Activated CD4-positive, alpha-beta memory T cell treated with anti-CD3 and anti-CD28 coated beads for 36 hours (primary cell): ENCODE measurements at regions of chr10 and their contacts with region 1.

Region 1: DNA sequence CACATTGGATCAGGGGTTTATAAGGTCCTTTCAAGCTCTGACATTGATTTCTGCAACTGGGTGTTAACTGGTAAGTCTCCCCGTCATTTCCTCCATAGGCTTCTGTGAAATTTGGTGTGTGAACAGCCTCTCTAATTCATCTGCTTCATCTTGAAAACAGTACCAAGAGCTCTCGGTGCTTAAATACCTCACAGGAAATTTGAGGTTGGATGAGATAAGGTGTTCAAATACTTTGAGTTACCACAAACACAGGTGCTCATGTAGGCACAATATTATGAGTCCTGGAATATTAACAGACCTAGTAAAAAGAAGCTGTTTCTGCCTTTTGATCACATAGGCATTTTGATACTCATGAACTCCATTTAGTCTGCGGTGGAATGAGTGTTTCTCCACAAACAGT is 85.2 kb downstream of the RTKN2 start:
- DNase-seq: peak; percentile 40
- H3K4me3 Mint-ChIP-seq: no peak overlapping the region
- H3K27ac Mint-ChIP-seq: peak overlapping the region; percentile 96
- H3K4me1 Mint-ChIP-seq: peaks cover 85% of the 10 kb centered on the region
- H3K27me3 Mint-ChIP-seq: no peaks in the 10 kb centered on the region

Region 2: DNA sequence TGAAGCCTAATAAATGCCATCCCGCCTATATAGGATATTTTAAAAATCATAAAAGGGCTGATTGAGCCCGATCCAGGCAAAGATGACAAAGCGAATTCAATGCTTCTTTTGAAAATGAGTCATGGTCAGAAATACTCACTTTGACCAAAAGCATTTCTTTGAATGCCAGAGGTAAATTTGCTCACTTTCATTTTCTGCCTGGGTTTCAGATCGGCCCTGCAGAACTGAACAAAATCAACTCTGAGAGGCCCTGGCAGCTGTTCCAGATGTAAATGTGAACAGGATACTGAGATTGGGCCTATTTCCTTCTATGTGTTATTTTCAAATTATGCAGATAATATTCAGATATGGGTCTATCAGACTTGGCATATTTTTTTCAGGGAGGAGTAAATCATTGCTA is 396.7 kb before region 1 on chr10:
- CTCF ChIA-PET with region 1: no interaction called
- POLR2A ChIA-PET with region 1: no interaction called
- intact Hi-C with region 1: loop called (anchors 2 kb)
- DNase-seq: peak; percentile 49
- H3K4me3 Mint-ChIP-seq: no peak overlapping the region
- H3K27ac Mint-ChIP-seq: peak overlapping the region; percentile 19
- H3K4me1 Mint-ChIP-seq: peaks cover 49% of the 10 kb centered on the region
- H3K27me3 Mint-ChIP-seq: no peaks in the 10 kb centered on the region

Region 3: GRCh38 chr10:61943674-61944410 is 239.6 kb before region 1 on chr10:
- CTCF ChIA-PET with region 1: no interaction called
- POLR2A ChIA-PET with region 1: interaction called, 10 read pairs
- intact Hi-C with region 1: loop called (anchors 1 kb)
- DNase-seq: peak; percentile 34
- H3K4me3 Mint-ChIP-seq: peak overlapping the region; percentile 70
- H3K27ac Mint-ChIP-seq: peak overlapping the region; percentile 92
- H3K4me1 Mint-ChIP-seq: peaks cover 57% of the 10 kb centered on the region
- H3K27me3 Mint-ChIP-seq: no peaks in the 10 kb centered on the region

Region 4: DNA sequence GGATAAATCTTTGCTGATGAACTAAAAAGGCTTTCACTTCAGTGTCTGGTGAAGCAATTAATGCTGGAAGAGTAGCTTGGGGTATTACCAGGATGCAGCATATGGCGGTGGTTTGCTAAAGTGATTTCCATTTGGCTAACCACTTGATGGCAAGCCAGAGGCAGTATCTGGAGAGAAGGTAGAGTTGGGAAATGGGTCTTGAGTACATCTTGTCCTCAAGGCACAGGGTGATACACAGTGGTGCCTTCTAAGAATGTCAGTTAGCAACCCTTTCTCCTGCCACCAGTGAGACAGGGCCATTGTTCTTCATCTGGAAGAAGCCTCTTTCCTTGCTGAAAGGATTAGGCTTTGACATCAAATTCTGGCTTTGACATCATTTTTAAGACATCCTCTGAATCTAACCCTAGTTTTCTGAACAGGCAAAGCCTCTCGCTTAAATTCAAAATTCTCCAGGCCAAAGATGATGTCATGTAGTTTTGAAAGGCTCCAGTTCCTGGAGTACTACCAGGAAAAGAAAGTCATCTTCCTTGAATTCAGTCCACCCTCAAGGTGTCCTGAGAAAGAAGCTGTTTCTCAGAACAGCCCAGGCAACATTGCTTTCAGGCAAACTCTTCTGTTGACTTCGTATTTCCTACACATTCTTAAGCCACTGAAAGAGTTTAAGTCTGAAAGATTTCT is 119.5 kb before region 1 on chr10:
- CTCF ChIA-PET with region 1: no interaction called
- POLR2A ChIA-PET with region 1: interaction called, 32 read pairs
- intact Hi-C with region 1: no loop called
- DNase-seq: no peak
- H3K4me3 Mint-ChIP-seq: peak overlapping the region; percentile 41
- H3K27ac Mint-ChIP-seq: peak overlapping the region; percentile 93
- H3K4me1 Mint-ChIP-seq: peaks cover 90% of the 10 kb centered on the region
- H3K27me3 Mint-ChIP-seq: no peaks in the 10 kb centered on the region

Region 5: DNA sequence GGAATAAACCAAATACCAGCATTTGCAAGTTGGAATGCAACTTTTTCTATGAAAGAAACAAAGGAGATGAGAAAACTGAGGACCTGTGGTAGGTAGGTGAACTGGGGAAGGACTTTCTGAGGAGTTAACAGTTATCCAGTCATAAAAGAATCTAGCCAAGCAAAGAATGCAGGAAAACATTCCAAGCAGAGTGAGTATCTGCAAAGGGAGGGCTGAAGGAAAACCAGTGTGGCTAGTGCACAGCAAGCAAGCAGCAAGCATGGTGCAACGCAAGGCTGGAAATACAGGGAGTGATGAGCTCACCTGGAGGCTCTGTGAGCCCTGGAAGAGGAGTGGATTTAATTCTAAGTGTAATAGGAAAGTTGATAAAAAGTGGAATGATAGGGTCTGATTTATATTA is 41.2 kb after region 1 on chr10:
- CTCF ChIA-PET with region 1: no interaction called
- POLR2A ChIA-PET with region 1: interaction called, 9 read pairs
- intact Hi-C with region 1: loop called (anchors 1 kb)
- DNase-seq: no peak
- H3K4me3 Mint-ChIP-seq: no peak overlapping the region
- H3K27ac Mint-ChIP-seq: peak overlapping the region; percentile 50
- H3K4me1 Mint-ChIP-seq: peaks cover 12% of the 10 kb centered on the region
- H3K27me3 Mint-ChIP-seq: no peaks in the 10 kb centered on the region

Region 6: DNA sequence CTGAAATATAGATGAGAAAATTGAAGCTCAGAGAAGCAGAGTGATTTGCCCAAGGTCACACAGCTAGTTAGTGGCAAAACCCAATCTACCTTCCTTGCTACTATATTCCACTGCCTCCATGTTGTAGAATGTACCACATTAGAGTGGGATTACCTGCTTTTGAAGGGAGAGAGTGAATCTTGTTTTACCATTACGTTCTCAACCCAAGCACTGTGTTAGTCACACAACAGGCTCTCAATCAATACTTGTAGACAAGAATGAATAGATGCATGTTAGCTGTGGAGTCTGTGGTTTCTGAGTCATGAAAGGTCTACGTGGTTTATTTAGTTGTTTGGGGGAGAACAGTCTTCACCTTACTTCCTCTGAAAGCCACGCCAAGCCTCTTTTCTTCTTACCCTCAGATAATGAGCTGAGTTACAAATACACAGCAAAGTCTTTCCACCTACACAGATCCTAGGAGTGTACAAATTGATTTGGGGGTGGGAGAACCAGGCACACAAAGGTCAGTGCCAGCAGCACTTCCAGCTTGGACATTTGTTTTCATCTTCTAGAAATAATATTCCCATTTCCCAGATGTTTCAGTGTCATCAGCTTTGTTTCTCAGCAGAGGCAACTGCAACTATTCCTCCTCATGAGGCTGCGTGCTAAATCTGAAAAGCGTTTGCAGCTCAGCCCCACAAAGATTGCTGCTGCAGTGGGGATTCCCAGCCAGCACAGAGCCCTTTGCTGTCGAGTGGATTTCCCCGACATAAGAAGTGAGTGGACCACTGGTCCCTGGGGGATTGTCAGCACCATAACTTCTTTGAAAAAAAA is 549.6 kb after region 1 on chr10:
- CTCF ChIA-PET with region 1: no interaction called
- POLR2A ChIA-PET with region 1: no interaction called
- intact Hi-C with region 1: loop called (anchors 5 kb)
- DNase-seq: peak; percentile 71
- H3K4me3 Mint-ChIP-seq: no peak overlapping the region
- H3K27ac Mint-ChIP-seq: no peak overlapping the region
- H3K4me1 Mint-ChIP-seq: peaks cover 19% of the 10 kb centered on the region
- H3K27me3 Mint-ChIP-seq: peaks cover 3% of the 10 kb centered on the region

Region 7: GRCh38 chr10:63268798-63269503 is 1085.5 kb after region 1 on chr10:
- CTCF ChIA-PET with region 1: no interaction called
- POLR2A ChIA-PET with region 1: no interaction called
- intact Hi-C with region 1: loop called (anchors 5 kb)
- DNase-seq: peak; percentile 89
- H3K4me3 Mint-ChIP-seq: peak overlapping the region; percentile 97
- H3K27ac Mint-ChIP-seq: peak overlapping the region; percentile 97
- H3K4me1 Mint-ChIP-seq: peaks cover 24% of the 10 kb centered on the region
- H3K27me3 Mint-ChIP-seq: no peaks in the 10 kb centered on the region